ENCODE measurements at regions of chr6 and their contacts with region 1.

Region 1: GRCh38 chr6:10429638-10430427 is 15.0 kb upstream of the TFAP2A start:
- DNase-seq: peak; percentile 48 to 76 (median 50)
- H3K4me3 ChIP-seq: no peak overlapping the region
- H3K4me3 Mint-ChIP-seq: peak overlapping the region in 1 of 2 donors; percentile 73
- H3K27ac ChIP-seq: no peak overlapping the region
- H3K27ac Mint-ChIP-seq: no peak overlapping the region
- H3K4me1 ChIP-seq: peaks cover 18 to 22% of the 10 kb centered on the region in 2 donors
- H3K4me1 Mint-ChIP-seq: peaks cover 29% of the 10 kb centered on the region
- H3K27me3 ChIP-seq: peaks cover 42 to 58% of the 10 kb centered on the region in 2 donors
- H3K27me3 Mint-ChIP-seq: peaks cover 41 to 54% (median 51%) of the 10 kb centered on the region in 3 donors
- CTCF ChIP-seq: no peak

Region 2: DNA sequence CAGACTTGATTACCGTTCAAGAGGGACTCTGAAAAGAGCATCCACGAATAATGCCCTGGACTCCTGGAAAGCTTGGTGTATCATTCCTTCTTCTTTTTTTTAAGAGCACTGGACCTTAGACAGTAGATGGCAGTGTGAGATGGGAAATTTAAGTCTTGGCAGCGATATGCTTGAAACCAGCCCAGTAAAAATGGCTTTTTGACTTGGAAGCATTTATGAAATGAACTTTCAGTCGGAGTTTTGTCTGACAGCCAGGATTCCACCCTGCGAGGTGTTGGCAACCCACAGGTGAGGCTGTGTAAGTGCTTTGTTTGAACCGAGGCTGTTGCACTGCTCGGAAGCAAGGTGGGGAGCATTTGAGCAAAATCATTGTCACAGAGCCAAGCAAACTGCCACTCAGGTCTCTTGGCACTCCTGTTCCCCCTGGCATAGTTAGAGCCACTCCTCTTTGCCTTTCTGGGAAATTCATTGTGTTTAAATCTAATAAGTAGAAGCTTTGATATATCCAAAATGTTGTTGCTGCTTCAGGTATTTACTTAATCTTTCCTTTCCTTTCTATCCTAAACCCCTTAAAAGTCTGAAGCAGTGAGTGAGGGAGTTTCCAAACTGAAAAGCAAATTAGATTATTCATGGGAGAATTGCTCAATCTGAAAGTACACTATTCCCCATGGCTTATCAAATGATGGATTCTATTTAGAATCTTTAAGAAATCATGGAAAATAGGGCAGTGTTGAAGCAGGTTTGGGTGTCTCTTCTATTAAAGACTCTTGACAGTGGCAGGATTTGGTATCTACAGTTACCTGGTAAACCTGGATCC is 1721.7 kb before region 1 on chr6:
- intact Hi-C with region 1: loop called (anchors 10 kb)
- DNase-seq: peak; percentile 2 to 29 (median 18)
- H3K4me3 ChIP-seq: no peak overlapping the region
- H3K4me3 Mint-ChIP-seq: peak overlapping the region in 1 of 2 donors; percentile 67
- H3K27ac ChIP-seq: no peak overlapping the region
- H3K27ac Mint-ChIP-seq: no peak overlapping the region
- H3K4me1 ChIP-seq: no peaks in the 10 kb centered on the region
- H3K4me1 Mint-ChIP-seq: peaks cover 7% of the 10 kb centered on the region
- H3K27me3 ChIP-seq: no peaks in the 10 kb centered on the region
- H3K27me3 Mint-ChIP-seq: no peaks in the 10 kb centered on the region
- CTCF ChIP-seq: peak; percentile 35

Region 3: GRCh38 chr6:8983188-8983688 is 1446.6 kb before region 1 on chr6:
- intact Hi-C with region 1: loop called (anchors 5 to 10 kb)
- DNase-seq: peak; percentile 12 to 43 (median 32)
- H3K4me3 ChIP-seq: peak overlapping the region in 1 of 3 experiments; percentile 28
- H3K4me3 Mint-ChIP-seq: no peak overlapping the region
- H3K27ac ChIP-seq: no peak overlapping the region
- H3K27ac Mint-ChIP-seq: no peak overlapping the region
- H3K4me1 ChIP-seq: peaks cover 0 to 4% of the 10 kb centered on the region in 2 donors
- H3K4me1 Mint-ChIP-seq: peaks cover 2% of the 10 kb centered on the region
- H3K27me3 ChIP-seq: no peaks in the 10 kb centered on the region
- H3K27me3 Mint-ChIP-seq: peaks cover 3 to 10% (median 7%) of the 10 kb centered on the region in 3 donors
- CTCF ChIP-seq: peak; percentile 97

Region 4: DNA sequence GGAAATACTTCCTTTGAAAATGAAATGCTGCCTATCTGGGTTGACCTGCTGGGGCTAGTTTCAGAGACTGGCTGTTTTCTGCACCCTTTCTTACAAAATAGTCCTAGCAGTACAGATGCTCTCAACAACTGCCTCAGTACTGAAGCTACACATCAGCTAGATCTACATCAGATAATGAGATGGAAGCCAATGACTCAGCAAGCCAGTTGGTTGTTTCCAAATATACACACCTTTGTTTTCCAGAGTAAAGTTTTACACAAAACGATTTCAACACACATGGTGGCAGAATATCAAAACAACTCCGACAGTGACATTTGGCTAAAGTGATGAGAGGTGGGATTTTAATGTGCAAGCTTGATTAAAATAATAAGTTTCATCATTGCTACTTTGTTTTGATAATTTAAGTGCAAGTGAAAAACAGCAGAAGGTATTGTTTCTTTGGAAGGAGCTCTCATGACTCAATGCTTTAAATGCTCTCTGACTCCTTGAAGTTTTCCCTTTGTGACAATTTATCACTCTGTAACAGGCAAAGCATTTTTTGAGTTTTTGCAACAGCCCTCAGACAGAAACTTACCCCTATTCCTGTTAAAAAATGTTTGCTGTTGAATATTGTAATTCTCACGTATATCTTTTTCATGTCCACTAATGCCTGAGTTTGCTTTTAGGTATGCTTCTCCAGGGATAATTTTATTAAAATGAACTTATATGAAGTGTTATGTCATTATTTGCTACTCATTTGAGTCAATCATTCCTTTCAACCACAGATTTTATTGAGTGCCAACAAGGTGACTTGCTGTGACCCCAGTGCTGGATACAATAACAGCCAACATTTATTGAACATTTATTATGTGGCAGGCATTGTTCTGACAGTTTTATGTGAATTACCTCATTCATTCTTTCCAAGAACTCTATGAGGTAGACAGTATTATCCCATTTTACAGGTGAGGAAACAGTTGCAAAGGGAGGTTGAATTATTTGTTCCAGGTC is 897.0 kb before region 1 on chr6:
- intact Hi-C with region 1: loop called (anchors 10 kb)
- DNase-seq: no peak
- H3K4me3 ChIP-seq: no peak overlapping the region
- H3K4me3 Mint-ChIP-seq: no peak overlapping the region
- H3K27ac ChIP-seq: no peak overlapping the region
- H3K27ac Mint-ChIP-seq: no peak overlapping the region
- H3K4me1 ChIP-seq: no peaks in the 10 kb centered on the region
- H3K4me1 Mint-ChIP-seq: no peaks in the 10 kb centered on the region
- H3K27me3 ChIP-seq: no peaks in the 10 kb centered on the region
- H3K27me3 Mint-ChIP-seq: no peaks in the 10 kb centered on the region
- CTCF ChIP-seq: no peak

Region 5: DNA sequence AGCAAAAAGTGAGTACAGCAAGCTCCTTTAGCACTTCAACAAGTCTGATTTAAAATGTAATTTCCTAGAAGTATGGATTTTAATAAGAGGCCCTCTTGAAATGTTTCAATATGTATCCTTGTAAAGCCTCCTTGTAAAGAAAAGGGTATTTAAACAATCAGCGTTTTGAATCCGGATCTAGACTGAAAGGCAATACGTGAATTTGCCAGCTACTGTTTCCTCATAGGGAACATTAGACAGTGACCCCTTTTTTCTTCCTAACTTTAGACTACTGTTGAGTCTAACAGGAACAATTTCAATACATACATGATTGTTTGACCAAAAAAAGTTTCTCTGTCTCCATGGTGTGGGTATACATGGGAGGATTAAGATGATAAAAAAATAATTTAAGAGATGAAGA is 410.0 kb before region 1 on chr6:
- intact Hi-C with region 1: loop called in 1 of 2 experiments (anchors 10 kb)
- DNase-seq: no peak
- H3K4me3 ChIP-seq: no peak overlapping the region
- H3K4me3 Mint-ChIP-seq: no peak overlapping the region
- H3K27ac ChIP-seq: no peak overlapping the region
- H3K27ac Mint-ChIP-seq: no peak overlapping the region
- H3K4me1 ChIP-seq: no peaks in the 10 kb centered on the region
- H3K4me1 Mint-ChIP-seq: no peaks in the 10 kb centered on the region
- H3K27me3 ChIP-seq: no peaks in the 10 kb centered on the region
- H3K27me3 Mint-ChIP-seq: peaks cover 0 to 9% (median 5%) of the 10 kb centered on the region in 3 donors
- CTCF ChIP-seq: no peak

Region 6: GRCh38 chr6:10030942-10031537 is 398.8 kb before region 1 on chr6:
- intact Hi-C with region 1: loop called (anchors 10 kb)
- DNase-seq: peak in 2 of 3 donors; percentile 25 to 32
- H3K4me3 ChIP-seq: no peak overlapping the region
- H3K4me3 Mint-ChIP-seq: no peak overlapping the region
- H3K27ac ChIP-seq: no peak overlapping the region
- H3K27ac Mint-ChIP-seq: no peak overlapping the region
- H3K4me1 ChIP-seq: no peaks in the 10 kb centered on the region
- H3K4me1 Mint-ChIP-seq: no peaks in the 10 kb centered on the region
- H3K27me3 ChIP-seq: peaks cover 3 to 15% of the 10 kb centered on the region in 2 donors
- H3K27me3 Mint-ChIP-seq: peaks cover 6 to 13% (median 11%) of the 10 kb centered on the region in 3 donors
- CTCF ChIP-seq: peak; percentile 82